OCI-LY7 (cell line): ENCODE measurements at regions of chr12 and their contacts with region 1.

Region 1: DNA sequence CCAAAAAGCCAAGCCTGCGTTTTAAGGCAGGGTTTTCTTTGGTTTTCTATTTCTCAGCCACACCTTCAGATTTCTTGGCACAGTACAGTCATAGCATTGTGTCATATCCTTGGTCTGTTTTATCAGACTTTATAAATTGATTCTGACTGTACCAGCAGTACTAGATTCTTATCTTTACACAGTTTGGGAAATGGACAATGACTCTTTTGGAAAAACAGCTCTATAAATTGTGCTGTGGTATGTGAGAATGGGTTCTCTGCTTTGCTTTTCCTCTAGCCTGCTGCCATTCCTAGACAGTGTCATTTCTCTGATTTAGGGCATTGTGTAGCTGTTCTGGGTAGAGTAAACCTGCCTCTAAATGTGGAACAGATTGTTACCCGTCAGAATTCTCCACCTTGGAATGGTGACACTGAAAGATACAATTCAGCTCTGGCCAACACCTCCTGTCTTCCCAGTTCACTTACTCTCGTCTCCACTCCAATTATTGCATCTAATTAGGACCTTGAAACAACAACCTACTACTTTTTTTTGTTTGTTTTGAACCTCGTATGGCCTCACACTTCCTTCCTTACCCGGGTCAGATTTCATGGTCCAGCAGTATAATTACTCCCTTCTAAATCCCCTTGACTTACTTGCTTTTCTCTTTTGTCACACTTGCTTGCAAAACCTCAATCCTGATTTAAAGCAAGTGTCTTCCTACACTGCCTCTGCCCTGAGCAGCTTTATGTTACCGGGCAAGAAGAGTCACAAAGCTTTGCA is 226.3 kb downstream of the ERC1 start:
- DNase-seq: no peak
- H3K4me3 ChIP-seq: no peak overlapping the region
- H3K27ac ChIP-seq: no peak overlapping the region
- H3K4me1 ChIP-seq: peaks cover 20% of the 10 kb centered on the region
- CTCF ChIP-seq: no peak

Region 2: GRCh38 chr12:597926-598568 is 619.3 kb before region 1 on chr12:
- CTCF ChIA-PET with region 1: no interaction called
- POLR2A ChIA-PET with region 1: no interaction called
- intact Hi-C with region 1: no loop called
- DNase-seq: no peak
- H3K4me3 ChIP-seq: no peak overlapping the region
- H3K27ac ChIP-seq: no peak overlapping the region
- H3K4me1 ChIP-seq: no peaks in the 10 kb centered on the region
- CTCF ChIP-seq: no peak

Region 3: DNA sequence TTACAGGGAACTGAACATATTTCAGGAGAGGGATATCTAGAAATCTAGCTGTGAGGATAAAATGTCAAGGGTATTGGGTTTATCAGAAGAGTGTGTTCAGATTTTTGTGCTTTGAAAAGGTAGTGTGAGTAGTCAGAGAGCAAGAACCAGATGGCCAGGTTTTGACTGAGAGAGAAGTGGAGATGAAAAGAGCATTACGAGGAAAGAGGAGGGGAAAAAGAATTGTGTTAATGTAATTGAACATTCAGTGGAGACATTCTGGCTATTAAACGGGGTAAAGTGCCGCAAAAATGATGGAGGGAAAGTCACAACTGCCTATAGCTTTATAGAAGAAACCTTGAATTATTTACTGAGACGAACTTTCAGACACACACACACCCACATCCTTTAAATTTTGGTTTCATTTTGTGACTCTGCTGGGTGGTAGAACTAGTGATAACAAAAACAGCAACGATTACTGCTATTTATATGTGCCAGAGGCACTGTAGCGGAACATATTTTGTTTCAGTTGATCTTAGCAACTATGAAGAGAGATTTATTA is 12.7 kb before region 1 on chr12:
- CTCF ChIA-PET with region 1: no interaction called
- POLR2A ChIA-PET with region 1: interaction called, 14 read pairs
- intact Hi-C with region 1: no loop called
- DNase-seq: peak; percentile 86
- H3K4me3 ChIP-seq: peak overlapping the region; percentile 72
- H3K27ac ChIP-seq: peak overlapping the region; percentile 100
- H3K4me1 ChIP-seq: peaks cover 63% of the 10 kb centered on the region
- CTCF ChIP-seq: no peak

Region 4: GRCh38 chr12:1252758-1253157 is 35.4 kb after region 1 on chr12:
- CTCF ChIA-PET with region 1: no interaction called
- POLR2A ChIA-PET with region 1: interaction called, 4 read pairs
- intact Hi-C with region 1: loop called (anchors 5 kb)
- DNase-seq: no peak
- H3K4me3 ChIP-seq: no peak overlapping the region
- H3K27ac ChIP-seq: no peak overlapping the region
- H3K4me1 ChIP-seq: no peaks in the 10 kb centered on the region
- CTCF ChIP-seq: no peak

Region 5: DNA sequence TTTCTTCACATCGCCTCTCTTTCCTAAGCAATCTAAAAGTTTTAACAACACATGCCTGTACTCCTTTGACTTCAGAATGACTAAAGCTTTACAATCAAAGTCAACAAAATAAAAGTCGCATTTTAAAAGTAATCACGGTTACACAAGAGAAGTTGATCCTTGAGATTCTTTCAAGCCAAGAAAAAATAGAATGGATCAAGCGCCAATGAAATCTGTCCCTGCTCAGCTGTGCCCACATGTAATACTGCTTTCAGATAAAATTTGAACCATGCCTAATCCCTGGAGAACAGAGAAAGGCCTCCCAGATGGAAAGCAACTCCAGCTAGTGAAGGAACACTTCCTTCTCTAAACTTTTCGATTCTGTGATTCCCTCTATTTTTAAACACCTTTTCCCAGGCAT is 264.0 kb after region 1 on chr12:
- CTCF ChIA-PET with region 1: no interaction called
- POLR2A ChIA-PET with region 1: no interaction called
- intact Hi-C with region 1: no loop called
- DNase-seq: no peak
- H3K4me3 ChIP-seq: no peak overlapping the region
- H3K27ac ChIP-seq: no peak overlapping the region
- H3K4me1 ChIP-seq: no peaks in the 10 kb centered on the region
- CTCF ChIP-seq: no peak

Region 6: DNA sequence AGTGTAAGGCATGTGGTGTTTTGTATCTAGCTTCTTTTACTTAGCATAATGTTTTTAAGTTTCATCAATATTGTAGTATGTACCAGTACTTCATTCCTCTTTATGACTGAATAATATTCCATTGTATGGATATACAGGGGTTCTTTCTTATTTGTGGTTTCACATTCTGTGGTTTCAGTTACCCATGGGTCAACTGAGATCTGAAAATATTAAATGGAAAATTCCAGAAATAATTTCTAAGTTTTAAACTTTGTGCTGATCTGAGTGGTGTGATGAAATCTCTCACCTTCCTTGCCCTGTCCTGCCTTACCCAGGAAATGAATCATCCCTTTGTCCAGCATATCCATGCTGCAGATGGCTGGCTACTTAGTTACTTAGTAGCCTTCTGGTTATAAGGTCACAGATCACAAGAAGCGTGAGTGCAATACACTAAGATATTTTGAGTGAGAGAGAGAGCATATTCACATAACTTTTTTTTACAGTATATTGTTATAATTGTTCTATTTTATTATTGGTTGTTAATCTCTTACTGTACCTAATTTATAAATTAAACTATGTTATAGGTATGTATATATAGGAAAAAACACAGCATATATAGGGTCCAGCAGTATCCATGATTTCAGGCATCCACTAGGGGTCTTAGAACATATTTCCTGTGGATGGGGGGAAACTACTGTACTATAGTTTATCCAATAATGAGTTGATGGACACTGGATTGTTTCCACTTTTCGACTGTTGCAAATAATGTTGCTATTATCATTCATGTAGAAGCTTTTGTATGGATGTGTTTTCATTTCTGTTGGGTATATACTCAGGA is 543.4 kb after region 1 on chr12:
- CTCF ChIA-PET with region 1: no interaction called
- POLR2A ChIA-PET with region 1: no interaction called
- intact Hi-C with region 1: no loop called
- DNase-seq: no peak
- H3K4me3 ChIP-seq: no peak overlapping the region
- H3K27ac ChIP-seq: no peak overlapping the region
- H3K4me1 ChIP-seq: no peaks in the 10 kb centered on the region
- CTCF ChIP-seq: 0 out of 2 replicates have a peak, but pooled peaks have one; percentile 25